GM12878 (cell line): ENCODE measurements at regions of chr2 and their contacts with region 1.

Region 1: DNA sequence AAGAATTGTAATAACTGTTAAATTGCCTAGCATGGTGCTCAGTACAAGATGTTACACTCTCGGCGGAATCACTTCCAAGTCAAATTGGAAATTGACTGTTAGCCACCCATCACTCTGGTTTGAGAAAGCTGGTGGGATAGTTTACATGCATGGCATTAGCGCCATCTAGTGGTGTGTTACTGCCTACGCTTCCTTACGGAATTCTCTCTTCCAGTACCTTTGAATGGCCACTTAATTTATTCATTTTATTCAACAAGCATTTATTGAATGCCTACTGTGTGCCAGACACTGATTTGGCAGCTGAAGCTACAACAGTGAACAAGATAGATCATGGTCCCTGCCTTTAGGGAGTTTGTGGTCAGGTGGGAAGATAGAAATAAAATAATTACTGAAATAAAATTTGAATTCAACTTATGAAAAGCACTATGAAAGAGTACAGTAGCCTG is 171.2 kb downstream of the TMEM247 start:
- DNase-seq: peak; percentile 48
- ATAC-seq: peak; percentile 93
- H3K4me3 ChIP-seq: no peak overlapping the region
- H3K27ac ChIP-seq: no peak overlapping the region
- H3K4me1 ChIP-seq: no peaks in the 10 kb centered on the region
- H3K27me3 ChIP-seq: no peaks in the 10 kb centered on the region
- CTCF ChIP-seq: peak; percentile 84 to 94 (median 89)
- EP300 ChIP-seq: no peak
- POLR2A ChIP-seq: no peak
- RAD21 ChIP-seq: peak; percentile 93

Region 2: DNA sequence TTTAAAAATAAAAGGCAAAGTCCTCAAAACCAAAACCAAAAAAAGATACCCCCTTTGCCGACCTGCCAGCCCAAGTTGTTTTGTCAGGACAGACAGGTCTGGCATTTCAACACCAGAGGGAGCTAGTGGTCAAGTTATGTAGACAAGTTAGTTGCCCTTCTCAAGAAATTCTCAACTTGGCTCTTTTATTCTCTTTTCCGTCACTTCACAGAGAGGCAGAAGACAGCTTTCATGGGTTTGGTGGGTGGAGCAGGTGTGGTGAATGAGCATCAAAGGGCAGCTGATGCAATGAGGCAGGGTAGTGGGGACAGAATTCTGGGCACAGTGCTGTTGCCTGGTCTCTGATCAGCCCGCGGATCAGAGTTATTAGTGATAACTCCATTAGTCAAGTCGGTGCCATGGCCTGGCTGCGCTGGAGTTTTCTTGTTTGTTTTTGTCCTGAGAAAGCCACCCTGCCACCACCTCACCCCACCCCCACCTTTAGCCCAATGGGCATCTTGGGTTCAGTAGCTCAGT is 657.0 kb before region 1 on chr2:
- CTCF ChIA-PET with region 1: interaction called, 3 read pairs
- POLR2A ChIA-PET with region 1: no interaction called
- RAD21 ChIA-PET with region 1: no interaction called
- SMC1A ChIA-PET with region 1: interaction called, 5 read pairs
- in situ Hi-C with region 1: no loop called
- intact Hi-C with region 1: loop called (anchors 5 kb)
- DNase-seq: peak; percentile 23
- ATAC-seq: peak; percentile 90
- H3K4me3 ChIP-seq: no peak overlapping the region
- H3K27ac ChIP-seq: no peak overlapping the region
- H3K4me1 ChIP-seq: no peaks in the 10 kb centered on the region
- H3K27me3 ChIP-seq: no peaks in the 10 kb centered on the region
- CTCF ChIP-seq: peak; percentile 72 to 79 (median 79)
- EP300 ChIP-seq: no peak
- POLR2A ChIP-seq: no peak
- RAD21 ChIP-seq: peak; percentile 81

Region 3: GRCh38 chr2:46490521-46491141 is 159.9 kb before region 1 on chr2:
- CTCF ChIA-PET with region 1: interaction called, 19 read pairs
- POLR2A ChIA-PET with region 1: no interaction called
- RAD21 ChIA-PET with region 1: interaction called, 8 read pairs
- SMC1A ChIA-PET with region 1: interaction called, 11 read pairs
- in situ Hi-C with region 1: no loop called
- intact Hi-C with region 1: no loop called
- DNase-seq: no peak
- ATAC-seq: peak; percentile 34
- H3K4me3 ChIP-seq: no peak overlapping the region
- H3K27ac ChIP-seq: 0 out of 2 replicates have a peak overlapping the region, but pooled peaks have one; percentile 12
- H3K4me1 ChIP-seq: peaks cover 30% of the 10 kb centered on the region
- H3K27me3 ChIP-seq: no peaks in the 10 kb centered on the region
- CTCF ChIP-seq: peak; percentile 1 to 46 (median 28); a peak in 4 of 6 replicates
- EP300 ChIP-seq: no peak
- POLR2A ChIP-seq: no peak
- RAD21 ChIP-seq: peak; percentile 65

Region 4: DNA sequence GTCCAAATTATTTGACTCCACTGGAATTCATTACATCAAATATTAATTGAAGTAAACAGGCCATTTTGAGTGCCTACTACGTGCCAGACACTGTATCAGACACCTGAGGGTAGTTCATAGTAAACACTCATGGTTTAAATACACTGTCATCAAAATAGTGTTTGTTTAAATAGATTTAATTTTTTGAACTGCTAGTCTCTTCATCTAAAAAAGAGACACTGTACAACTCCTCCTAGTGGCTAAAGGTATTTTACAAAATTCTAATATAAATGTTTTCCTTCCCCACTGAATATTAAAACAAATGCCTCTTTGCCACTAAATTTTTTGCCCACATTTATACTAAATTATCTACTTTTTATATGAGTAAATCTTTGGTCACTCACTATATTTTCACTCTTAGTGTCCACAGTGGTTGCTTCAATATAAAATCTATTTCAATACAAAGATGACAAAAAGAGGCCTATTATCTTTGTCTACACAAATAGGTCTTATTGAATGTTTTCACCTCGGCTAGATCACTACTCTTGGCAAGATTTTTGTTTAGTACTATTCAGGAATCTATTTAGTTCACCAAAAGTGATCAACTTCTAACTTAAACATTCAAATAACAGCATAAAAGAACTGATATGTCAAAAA is 49.1 kb before region 1 on chr2:
- CTCF ChIA-PET with region 1: interaction called, 5 read pairs
- POLR2A ChIA-PET with region 1: no interaction called
- RAD21 ChIA-PET with region 1: no interaction called
- SMC1A ChIA-PET with region 1: interaction called, 27 read pairs
- in situ Hi-C with region 1: no loop called
- intact Hi-C with region 1: no loop called
- DNase-seq: no peak
- ATAC-seq: 0 out of 3 replicates have a peak, but pooled peaks have one; percentile 21
- H3K4me3 ChIP-seq: no peak overlapping the region
- H3K27ac ChIP-seq: no peak overlapping the region
- H3K4me1 ChIP-seq: no peaks in the 10 kb centered on the region
- H3K27me3 ChIP-seq: no peaks in the 10 kb centered on the region
- CTCF ChIP-seq: peak; percentile 22 to 50 (median 31); a peak in 3 of 6 replicates
- EP300 ChIP-seq: no peak
- POLR2A ChIP-seq: no peak
- RAD21 ChIP-seq: 0 out of 2 replicates have a peak, but pooled peaks have one; percentile 38

Region 5: GRCh38 chr2:46632349-46632748 is 18.2 kb before region 1 on chr2:
- CTCF ChIA-PET with region 1: interaction called, 17 read pairs
- POLR2A ChIA-PET with region 1: no interaction called
- RAD21 ChIA-PET with region 1: no interaction called
- SMC1A ChIA-PET with region 1: interaction called, 18 read pairs
- in situ Hi-C with region 1: no loop called
- intact Hi-C with region 1: no loop called
- DNase-seq: no peak
- ATAC-seq: peak; percentile 60
- H3K4me3 ChIP-seq: no peak overlapping the region
- H3K27ac ChIP-seq: no peak overlapping the region
- H3K4me1 ChIP-seq: no peaks in the 10 kb centered on the region
- H3K27me3 ChIP-seq: no peaks in the 10 kb centered on the region
- CTCF ChIP-seq: peak; percentile 32 to 43 (median 42); a peak in 4 of 6 replicates
- EP300 ChIP-seq: no peak
- POLR2A ChIP-seq: no peak
- RAD21 ChIP-seq: peak; percentile 63

Region 6: GRCh38 chr2:46887028-46887885 is 236.7 kb after region 1 on chr2:
- CTCF ChIA-PET with region 1: interaction called, 5 read pairs
- POLR2A ChIA-PET with region 1: no interaction called
- RAD21 ChIA-PET with region 1: interaction called, 3 read pairs
- SMC1A ChIA-PET with region 1: interaction called, 6 read pairs
- in situ Hi-C with region 1: loop called (anchors 5 kb)
- intact Hi-C with region 1: loop called (anchors 2 kb)
- DNase-seq: no peak
- ATAC-seq: no peak
- H3K4me3 ChIP-seq: no peak overlapping the region
- H3K27ac ChIP-seq: no peak overlapping the region
- H3K4me1 ChIP-seq: no peaks in the 10 kb centered on the region
- H3K27me3 ChIP-seq: no peaks in the 10 kb centered on the region; a peak in 1 of 4 replicates
- CTCF ChIP-seq: no peak
- EP300 ChIP-seq: no peak
- POLR2A ChIP-seq: no peak
- RAD21 ChIP-seq: no peak